Sigmoid colon (tissue), 7 donors: ENCODE measurements at regions of chr17 and their contacts with region 1.

Region 1: GRCh38 chr17:63697341-63698286 is 2.3 kb downstream of the LIMD2 start:
- DNase-seq: no peak
- H3K4me3 ChIP-seq: peak overlapping the region in 2 of 4 donors; percentile 64 to 76
- H3K27ac ChIP-seq: peak overlapping the region; percentile 65 to 75 (median 70)
- H3K4me1 ChIP-seq: peaks cover 0 to 54% (median 42%) of the 10 kb centered on the region in 4 donors
- H3K27me3 ChIP-seq: no peaks in the 10 kb centered on the region
- CTCF ChIP-seq: peak in 3 of 4 experiments; percentile 23 to 35 (median 31)
- EP300 ChIP-seq: no peak
- POLR2A ChIP-seq: no peak

Region 2: DNA sequence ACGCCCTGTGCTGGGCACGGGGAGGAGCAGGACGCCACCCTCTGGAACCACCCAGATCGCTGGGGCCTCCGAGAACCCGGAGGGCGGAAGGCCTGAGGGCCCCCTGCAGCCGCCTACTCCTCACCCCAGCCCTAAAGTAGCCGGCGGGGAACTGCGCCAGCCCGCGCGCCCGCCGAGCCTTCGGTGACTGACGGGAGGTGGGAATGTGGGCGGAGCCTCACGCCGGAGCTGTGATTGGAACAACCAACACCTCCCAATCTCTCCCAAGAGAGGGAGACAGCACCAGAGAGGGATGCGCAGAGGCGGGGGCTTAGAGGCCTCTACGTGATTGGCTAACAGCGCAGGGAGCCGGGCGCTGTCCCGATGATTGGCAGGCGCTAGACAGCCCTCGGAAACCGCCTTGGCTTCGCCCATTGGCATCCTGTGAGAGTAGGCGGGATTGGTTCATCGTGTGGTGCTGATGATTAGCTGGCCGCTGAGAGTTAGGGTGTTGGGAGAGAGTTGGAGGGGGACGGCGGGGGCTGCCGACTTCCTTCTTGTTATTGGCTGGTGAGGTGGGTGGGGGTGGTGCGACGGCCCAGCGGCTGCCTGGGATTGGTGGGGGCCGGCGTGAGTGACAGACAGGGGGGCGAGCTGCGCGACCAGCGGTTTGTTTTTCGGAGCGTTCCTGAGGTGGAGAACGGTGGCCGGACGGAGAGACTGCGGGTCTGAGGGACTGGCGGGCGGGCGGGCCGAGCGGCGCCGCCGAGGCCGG is 75.7 kb before region 1 on chr17 and contains the start of gene MAP3K3:
- intact Hi-C with region 1: loop called (anchors 5 kb)
- DNase-seq: peak; percentile 100
- H3K4me3 ChIP-seq: peak within 1 kb of the TSS; percentile 77 to 90 (median 82)
- H3K27ac ChIP-seq: peak within 1 kb of the TSS; percentile 87 to 93 (median 91)
- H3K4me1 ChIP-seq: peaks cover 0 to 43% (median 41%) of the 10 kb centered on the region in 4 donors
- H3K27me3 ChIP-seq: no peaks in the 10 kb centered on the region
- CTCF ChIP-seq: peak in 2 of 4 experiments; percentile 5 to 17
- EP300 ChIP-seq: no peak
- POLR2A ChIP-seq: peak; percentile 52 to 72
- total RNA-seq, gene MAP3K3: 51.5 to 68.7 (median 59.8) TPM